B cell (primary cell): ENCODE measurements at regions of chr22 and their contacts with region 1.

Region 1: DNA sequence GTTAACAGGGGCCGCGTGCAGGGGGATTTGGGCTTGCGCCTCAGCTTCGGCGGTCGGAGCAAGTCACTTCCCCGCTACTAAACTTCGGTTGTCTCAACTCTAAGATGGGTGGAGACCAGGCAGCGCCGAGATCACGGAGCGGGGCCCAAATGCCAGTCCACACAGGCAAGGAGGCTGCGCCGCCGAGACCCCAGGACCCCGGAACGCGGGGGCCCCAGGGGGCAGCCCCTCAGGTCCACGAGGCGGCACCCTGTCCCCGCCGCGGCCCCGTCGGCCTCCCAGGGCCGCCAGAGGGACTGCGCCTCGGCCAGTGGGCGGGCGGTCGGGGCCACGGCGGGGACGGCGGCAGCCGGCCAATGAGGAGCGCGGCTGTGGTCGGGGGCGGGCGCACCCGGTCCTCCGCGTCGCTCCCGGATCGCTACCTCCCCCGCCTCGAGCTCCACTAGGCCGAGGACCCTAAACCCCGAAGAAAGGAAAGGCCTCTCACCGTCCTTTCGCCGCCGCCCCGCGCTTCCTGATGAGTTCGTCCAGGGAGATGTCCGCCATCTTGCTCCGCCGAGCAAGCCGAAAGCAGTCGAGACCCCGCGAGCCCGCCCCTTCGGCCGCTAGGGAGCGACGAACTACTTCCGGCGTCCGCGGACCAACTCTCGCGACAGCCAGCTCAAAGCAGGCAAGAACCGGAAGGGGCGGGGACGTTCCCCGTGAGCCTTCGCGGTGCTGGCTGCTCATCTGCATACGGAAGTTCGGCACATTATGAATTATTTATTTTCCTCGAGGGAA is at the start of gene POLDIP3:
- DNase-seq: peak; percentile 99
- ATAC-seq: peak; percentile 68
- H3K4me3 ChIP-seq: peak within 1 kb of the TSS; percentile 59 to 91 (median 74)
- H3K4me3 Mint-ChIP-seq: peak within 1 kb of the TSS; percentile 94
- H3K27ac ChIP-seq: peak within 1 kb of the TSS; percentile 98 to 100
- H3K27ac Mint-ChIP-seq: peak within 1 kb of the TSS; percentile 100
- H3K4me1 ChIP-seq: peaks cover 21 to 46% of the 10 kb centered on the region in 2 donors
- H3K4me1 Mint-ChIP-seq: peaks cover 56% of the 10 kb centered on the region
- H3K27me3 ChIP-seq: no peaks in the 10 kb centered on the region
- H3K27me3 Mint-ChIP-seq: no peaks in the 10 kb centered on the region
- CTCF ChIP-seq: no peak
- total RNA-seq, gene POLDIP3: 84.0 and 86.5 TPM in 2 replicates

Region 2: DNA sequence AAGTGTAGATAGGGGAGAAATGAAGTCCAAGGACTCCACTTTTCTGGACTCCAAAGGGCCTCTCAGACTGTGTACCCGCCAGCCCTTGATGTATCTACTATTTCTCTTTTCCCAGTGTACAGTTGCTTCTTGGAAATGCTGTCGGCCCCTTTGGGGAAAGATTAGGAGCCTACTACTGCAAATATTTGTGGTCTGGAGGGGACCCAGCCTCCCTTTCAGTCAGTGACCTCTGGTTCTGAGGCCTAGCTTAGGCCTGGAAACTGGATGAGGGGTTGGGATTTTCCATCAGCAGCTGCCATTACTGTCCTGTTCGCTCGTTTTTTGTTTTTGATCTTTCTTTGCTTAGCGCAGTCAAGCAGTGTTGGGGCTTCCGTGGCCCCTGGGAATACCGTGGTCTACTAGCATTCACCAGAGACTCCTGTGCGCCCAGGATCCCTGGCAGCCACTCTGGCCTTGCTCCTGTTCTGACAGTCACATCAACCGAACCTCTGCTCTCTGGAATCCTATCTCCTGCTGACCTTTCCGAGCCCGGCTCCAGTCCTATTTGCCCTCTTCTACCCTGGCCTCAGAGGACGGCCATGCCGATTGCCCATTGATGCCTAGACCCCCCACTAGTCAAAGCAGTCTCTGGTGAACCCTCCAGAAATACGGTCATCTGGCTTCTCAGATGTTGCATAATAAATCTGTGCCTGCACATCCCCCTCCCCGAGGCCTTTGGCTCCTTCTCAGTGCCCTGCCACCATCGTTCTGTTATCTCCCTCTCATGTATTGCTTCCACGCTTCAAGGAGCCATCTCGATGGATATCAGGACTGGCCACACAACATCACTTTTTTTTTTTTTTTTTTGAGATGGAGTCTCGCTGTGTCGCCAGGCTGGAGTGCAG is 93.6 kb before region 1 on chr22:
- CTCF ChIA-PET with region 1: no interaction called
- POLR2A ChIA-PET with region 1: no interaction called
- intact Hi-C with region 1: loop called (anchors 1 kb)
- DNase-seq: no peak
- ATAC-seq: no peak
- H3K4me3 ChIP-seq: no peak overlapping the region
- H3K4me3 Mint-ChIP-seq: peak overlapping the region; percentile 98
- H3K27ac ChIP-seq: no peak overlapping the region
- H3K27ac Mint-ChIP-seq: peak overlapping the region; percentile 76
- H3K4me1 ChIP-seq: peaks cover 3 to 18% of the 10 kb centered on the region in 2 donors
- H3K4me1 Mint-ChIP-seq: peaks cover 17% of the 10 kb centered on the region
- H3K27me3 ChIP-seq: no peaks in the 10 kb centered on the region
- H3K27me3 Mint-ChIP-seq: no peaks in the 10 kb centered on the region
- CTCF ChIP-seq: no peak

Region 3: DNA sequence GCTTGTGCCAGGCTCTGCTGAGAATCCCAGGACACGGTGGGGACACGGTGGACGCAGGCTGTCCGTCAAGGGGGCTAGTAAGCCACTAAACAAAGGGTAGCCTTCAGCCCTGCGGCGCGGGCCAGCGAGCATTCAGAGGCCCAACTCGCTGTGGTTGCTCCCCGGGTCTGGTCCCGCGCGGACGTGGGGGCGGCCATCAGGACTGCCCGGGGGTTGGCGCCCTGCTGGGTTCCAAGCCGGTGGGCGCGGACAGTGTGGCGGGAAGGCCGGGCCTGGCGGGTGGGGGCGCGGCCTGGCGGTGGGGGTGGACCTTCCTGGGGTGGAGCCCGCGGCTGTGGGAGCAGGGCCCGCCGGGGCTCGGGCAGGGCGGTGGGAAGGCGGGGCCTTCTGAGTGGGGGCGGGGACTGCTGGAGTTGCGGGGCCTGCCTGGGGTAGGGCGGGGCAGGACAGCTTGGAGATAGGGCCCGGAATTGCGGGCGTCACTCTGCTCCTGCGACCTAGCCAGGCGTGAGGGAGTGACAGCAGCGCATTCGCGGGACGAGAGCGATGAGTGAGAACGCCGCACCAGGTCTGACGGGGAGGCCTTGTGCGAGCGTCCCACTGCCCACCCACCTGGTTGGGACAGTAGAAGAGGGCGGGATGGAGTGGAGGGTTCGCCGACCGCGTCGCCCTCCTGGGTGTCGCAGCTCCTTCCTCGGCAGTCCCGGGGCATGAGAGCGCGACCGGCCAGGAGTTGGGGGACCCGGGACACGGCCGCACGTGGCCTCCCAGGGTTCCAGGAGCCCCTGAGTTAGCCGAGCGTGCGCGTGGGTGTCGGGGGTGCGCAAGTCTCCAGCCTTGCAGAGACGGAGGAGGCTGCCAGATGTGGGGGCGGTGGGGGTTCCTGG is 60.8 kb before region 1 on chr22 and contains the start of gene SERHL2:
- CTCF ChIA-PET with region 1: interaction called, 4 read pairs
- POLR2A ChIA-PET with region 1: interaction called, 8 read pairs
- intact Hi-C with region 1: loop called (anchors 2 kb)
- DNase-seq: peak; percentile 92
- ATAC-seq: peak; percentile 95
- H3K4me3 ChIP-seq: peak within 1 kb of the TSS in 4 of 5 experiments; percentile 65 to 73 (median 70)
- H3K4me3 Mint-ChIP-seq: peak within 1 kb of the TSS; percentile 93
- H3K27ac ChIP-seq: peak within 1 kb of the TSS; percentile 62 to 69
- H3K27ac Mint-ChIP-seq: peak within 1 kb of the TSS; percentile 75
- H3K4me1 ChIP-seq: peaks cover 39 to 50% of the 10 kb centered on the region in 2 donors
- H3K4me1 Mint-ChIP-seq: peaks cover 46% of the 10 kb centered on the region
- H3K27me3 ChIP-seq: no peaks in the 10 kb centered on the region
- H3K27me3 Mint-ChIP-seq: no peaks in the 10 kb centered on the region
- CTCF ChIP-seq: no peak
- total RNA-seq, gene SERHL2: 5.0 and 5.5 TPM in 2 replicates

Region 4: DNA sequence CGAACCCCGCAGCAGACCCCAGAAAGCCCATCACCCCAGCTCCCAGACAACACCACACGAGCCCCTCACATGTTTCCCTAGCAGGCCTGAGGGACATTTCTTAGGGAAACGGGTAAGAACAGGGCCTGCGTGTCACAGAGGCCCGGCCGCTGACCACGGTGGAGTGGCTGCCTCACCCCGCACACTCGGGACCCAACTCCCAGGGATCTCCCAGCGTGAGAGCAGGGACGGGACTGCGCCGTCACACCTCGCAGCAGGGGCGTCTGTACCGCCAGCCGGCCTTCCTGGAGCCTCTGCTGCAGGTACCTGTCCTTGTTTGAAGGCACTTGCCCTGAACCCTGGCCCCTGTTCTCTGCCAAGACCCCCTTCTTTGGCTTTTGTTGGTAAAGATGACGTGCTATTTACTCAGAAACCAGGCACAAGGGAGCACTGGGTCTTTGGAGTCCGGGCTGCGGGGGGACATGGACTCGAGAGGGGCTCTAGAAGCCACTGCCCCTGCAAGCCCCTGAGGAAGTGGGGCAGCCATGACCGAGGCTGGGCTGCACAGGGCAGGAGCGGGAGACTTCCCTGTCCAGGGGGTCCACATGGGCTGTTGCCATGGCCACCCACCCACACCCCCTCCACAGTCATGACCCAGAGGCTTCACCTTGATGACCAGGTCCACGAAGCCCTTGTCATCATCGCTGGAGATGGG is 15.9 kb after region 1 on chr22:
- CTCF ChIA-PET with region 1: no interaction called
- POLR2A ChIA-PET with region 1: no interaction called
- intact Hi-C with region 1: no loop called
- DNase-seq: no peak
- ATAC-seq: no peak
- H3K4me3 ChIP-seq: no peak overlapping the region
- H3K4me3 Mint-ChIP-seq: no peak overlapping the region
- H3K27ac ChIP-seq: no peak overlapping the region
- H3K27ac Mint-ChIP-seq: no peak overlapping the region
- H3K4me1 ChIP-seq: no peaks in the 10 kb centered on the region
- H3K4me1 Mint-ChIP-seq: peaks cover 2% of the 10 kb centered on the region
- H3K27me3 ChIP-seq: no peaks in the 10 kb centered on the region
- H3K27me3 Mint-ChIP-seq: no peaks in the 10 kb centered on the region
- CTCF ChIP-seq: no peak

Region 5: DNA sequence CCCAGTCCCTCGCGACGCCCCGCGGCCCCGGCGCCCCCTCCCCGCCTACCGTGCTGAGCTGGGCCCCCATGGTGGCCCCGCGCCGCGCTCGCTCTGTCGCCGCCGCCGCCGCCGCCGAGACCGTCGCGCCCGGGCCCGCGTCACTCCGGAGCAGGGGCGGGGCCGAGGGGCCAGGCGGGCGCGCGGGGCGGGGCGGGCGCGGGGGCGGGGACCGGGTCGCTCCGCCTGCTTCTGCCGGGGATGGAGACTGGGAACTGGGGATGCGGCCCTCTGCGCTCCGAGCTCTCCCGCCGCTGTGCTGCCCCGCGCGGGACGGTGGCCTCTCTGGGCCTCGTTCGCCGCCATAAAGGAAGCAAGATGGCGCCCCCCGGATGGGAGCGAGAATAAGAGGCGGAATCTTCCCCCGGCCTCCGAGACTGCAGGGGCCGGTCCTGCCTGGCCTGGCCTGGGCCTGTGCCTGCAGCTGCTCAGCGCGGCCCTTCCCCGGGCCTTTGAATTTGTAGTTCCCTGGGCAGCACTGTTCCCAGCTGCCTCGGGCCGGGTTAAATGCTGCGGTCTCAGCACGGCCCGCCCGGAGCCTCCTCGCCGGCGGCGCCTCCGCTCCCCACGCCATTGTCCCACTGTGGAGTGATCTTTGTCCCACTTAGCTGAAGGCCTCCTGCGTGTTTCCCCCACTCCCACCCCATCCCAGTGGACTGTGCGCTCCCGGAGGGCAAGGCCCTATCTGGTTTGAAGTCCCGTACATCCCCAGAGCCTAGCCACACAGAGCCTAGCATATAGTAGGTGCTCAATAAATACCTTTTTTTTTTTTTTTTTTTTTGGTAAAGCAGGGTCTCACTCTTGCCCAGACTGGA is 35.0 kb after region 1 on chr22 and contains the start of gene CYB5R3:
- CTCF ChIA-PET with region 1: no interaction called
- POLR2A ChIA-PET with region 1: interaction called, 23 read pairs
- intact Hi-C with region 1: loop called (anchors 1 kb)
- DNase-seq: peak; percentile 83
- ATAC-seq: peak; percentile 78
- H3K4me3 ChIP-seq: peak within 1 kb of the TSS; percentile 72 to 86 (median 82)
- H3K4me3 Mint-ChIP-seq: peak within 1 kb of the TSS; percentile 99
- H3K27ac ChIP-seq: peak within 1 kb of the TSS; percentile 85 to 88
- H3K27ac Mint-ChIP-seq: peak within 1 kb of the TSS; percentile 98
- H3K4me1 ChIP-seq: peaks cover 47 to 59% of the 10 kb centered on the region in 2 donors
- H3K4me1 Mint-ChIP-seq: peaks cover 54% of the 10 kb centered on the region
- H3K27me3 ChIP-seq: no peaks in the 10 kb centered on the region
- H3K27me3 Mint-ChIP-seq: no peaks in the 10 kb centered on the region
- CTCF ChIP-seq: no peak
- total RNA-seq, gene CYB5R3: 79.2 and 80.6 TPM in 2 replicates

Region 6: DNA sequence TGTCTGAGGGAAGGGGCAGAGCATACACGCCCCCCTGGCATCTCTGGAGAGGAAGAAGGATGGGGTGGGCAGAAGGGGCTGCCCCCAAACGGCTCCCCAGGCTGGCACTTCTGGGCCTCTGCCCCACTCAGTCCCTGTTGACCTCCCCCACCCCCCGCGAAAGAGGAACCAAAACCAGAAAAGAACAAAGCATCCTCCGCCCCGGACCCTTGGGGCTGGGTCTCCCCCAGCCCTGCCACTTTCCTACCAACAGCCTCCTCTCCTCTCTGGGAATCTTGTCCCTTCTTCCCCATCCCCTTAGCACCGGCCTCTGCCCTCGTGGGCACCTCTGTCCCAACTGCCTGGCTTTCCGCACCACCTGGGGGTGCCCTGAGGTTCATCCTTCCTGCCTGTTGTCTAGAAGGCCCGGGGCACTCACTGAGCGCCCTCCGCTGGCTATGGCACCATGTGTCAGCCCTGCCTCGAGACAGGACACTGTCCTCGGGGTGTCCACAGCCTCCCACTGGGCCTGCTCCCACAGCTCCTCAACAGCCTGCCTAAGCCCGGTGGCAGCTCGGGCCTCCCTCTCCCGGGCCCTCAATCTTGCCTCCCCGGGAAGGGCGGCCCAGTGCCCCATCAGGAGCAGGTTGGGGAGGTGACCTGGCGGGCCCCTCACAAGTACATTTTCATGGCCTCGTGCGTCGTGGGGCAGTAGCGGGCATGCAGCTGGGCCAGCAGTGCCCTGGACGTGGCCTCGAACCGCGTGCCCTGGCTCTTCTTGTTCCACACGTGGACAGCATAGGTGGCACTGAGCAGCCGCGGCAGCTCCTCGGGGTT is 77.9 kb after region 1 on chr22:
- CTCF ChIA-PET with region 1: no interaction called
- POLR2A ChIA-PET with region 1: no interaction called
- intact Hi-C with region 1: loop called (anchors 2 kb)
- DNase-seq: peak; percentile 77
- ATAC-seq: peak; percentile 86
- H3K4me3 ChIP-seq: peak overlapping the region in 3 of 5 experiments; percentile 15 to 36 (median 28)
- H3K4me3 Mint-ChIP-seq: peak overlapping the region; percentile 83
- H3K27ac ChIP-seq: peak overlapping the region in 1 of 2 donors; percentile 34
- H3K27ac Mint-ChIP-seq: peak overlapping the region; percentile 91
- H3K4me1 ChIP-seq: peaks cover 22 to 32% of the 10 kb centered on the region in 2 donors
- H3K4me1 Mint-ChIP-seq: peaks cover 32% of the 10 kb centered on the region
- H3K27me3 ChIP-seq: no peaks in the 10 kb centered on the region
- H3K27me3 Mint-ChIP-seq: no peaks in the 10 kb centered on the region
- CTCF ChIP-seq: peak; percentile 32

Region 7: GRCh38 chr22:42856865-42857704 is 242.6 kb after region 1 on chr22 and contains the start of gene ARFGAP3:
- CTCF ChIA-PET with region 1: no interaction called
- POLR2A ChIA-PET with region 1: interaction called, 6 read pairs
- intact Hi-C with region 1: loop called (anchors 1 kb)
- DNase-seq: peak; percentile 98
- ATAC-seq: peak; percentile 93
- H3K4me3 ChIP-seq: peak within 1 kb of the TSS; percentile 65 to 82 (median 77)
- H3K4me3 Mint-ChIP-seq: peak within 1 kb of the TSS; percentile 86
- H3K27ac ChIP-seq: peak within 1 kb of the TSS; percentile 83 to 86
- H3K27ac Mint-ChIP-seq: peak within 1 kb of the TSS; percentile 88
- H3K4me1 ChIP-seq: peaks cover 27 to 42% of the 10 kb centered on the region in 2 donors
- H3K4me1 Mint-ChIP-seq: peaks cover 30% of the 10 kb centered on the region
- H3K27me3 ChIP-seq: no peaks in the 10 kb centered on the region
- H3K27me3 Mint-ChIP-seq: no peaks in the 10 kb centered on the region
- CTCF ChIP-seq: no peak
- total RNA-seq, gene ARFGAP3: 33.2 and 35.2 TPM in 2 replicates